Esophagus muscularis mucosa (tissue), 4 donors: ENCODE measurements at regions of chr14 and their contacts with region 1.

Region 1: DNA sequence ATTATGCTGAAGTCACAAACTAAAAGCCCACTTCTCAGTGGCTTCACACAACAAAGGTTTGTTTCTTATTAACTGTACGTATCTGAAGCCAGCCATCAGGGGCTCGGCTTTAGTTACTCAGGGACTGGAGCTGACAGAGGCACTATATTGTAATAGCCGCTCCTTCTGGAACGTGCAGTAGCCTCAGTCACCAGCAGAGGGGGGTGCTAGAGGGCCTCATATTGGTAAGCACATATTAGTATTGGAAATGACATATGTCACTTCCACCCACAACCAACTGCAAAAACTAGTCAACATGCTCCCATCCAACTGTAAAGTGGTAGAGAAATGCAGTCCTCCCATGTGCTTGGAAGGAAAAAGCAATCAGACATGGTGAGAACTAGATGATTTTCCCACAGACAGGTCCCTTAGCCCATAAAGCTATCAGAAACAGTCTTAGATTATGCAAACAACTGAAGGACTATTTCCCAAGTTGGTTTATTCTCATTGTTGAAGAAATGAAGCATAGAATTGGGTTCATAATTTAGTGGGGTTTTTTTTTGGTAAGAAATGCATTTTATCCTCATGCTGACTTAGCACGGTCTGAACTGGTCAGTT is 183.6 kb upstream of the G2E3 start:
- DNase-seq: no peak
- H3K4me3 ChIP-seq: no peak overlapping the region
- H3K27ac ChIP-seq: no peak overlapping the region
- H3K4me1 ChIP-seq: no peaks in the 10 kb centered on the region
- H3K27me3 ChIP-seq: no peaks in the 10 kb centered on the region
- CTCF ChIP-seq: peak; percentile 67 to 87 (median 71)
- EP300 ChIP-seq: no peak
- POLR2A ChIP-seq: no peak

Region 2: GRCh38 chr14:29671034-29671433 is 704.4 kb before region 1 on chr14:
- intact Hi-C with region 1: no loop called
- DNase-seq: no peak
- H3K4me3 ChIP-seq: no peak overlapping the region
- H3K27ac ChIP-seq: peak overlapping the region in 1 of 4 donors; percentile 13
- H3K4me1 ChIP-seq: peaks cover 0 to 10% (median 2%) of the 10 kb centered on the region in 4 donors
- H3K27me3 ChIP-seq: no peaks in the 10 kb centered on the region
- CTCF ChIP-seq: no peak
- EP300 ChIP-seq: no peak
- POLR2A ChIP-seq: no peak

Region 3: DNA sequence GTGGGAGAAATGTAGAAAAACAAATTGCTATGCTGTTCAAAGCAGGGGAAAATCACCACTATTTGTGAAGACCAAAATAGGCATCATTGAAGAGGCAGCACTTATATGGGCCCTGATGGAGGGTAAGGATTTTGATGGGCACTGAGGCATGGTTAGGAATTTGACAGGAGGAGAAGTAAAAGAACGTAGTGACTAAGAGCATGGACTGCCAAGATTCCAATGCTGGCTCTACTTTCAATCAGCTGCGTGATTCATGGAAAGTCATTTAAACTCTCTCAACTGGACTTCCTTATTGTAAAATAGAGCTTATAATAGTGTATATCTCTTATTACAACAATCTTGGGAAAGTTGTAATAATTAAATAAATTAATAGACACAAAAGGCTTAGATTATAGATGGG is 84.2 kb before region 1 on chr14:
- intact Hi-C with region 1: no loop called
- DNase-seq: no peak
- H3K4me3 ChIP-seq: no peak overlapping the region
- H3K27ac ChIP-seq: no peak overlapping the region
- H3K4me1 ChIP-seq: no peaks in the 10 kb centered on the region
- H3K27me3 ChIP-seq: no peaks in the 10 kb centered on the region
- CTCF ChIP-seq: no peak
- EP300 ChIP-seq: no peak
- POLR2A ChIP-seq: no peak

Region 4: GRCh38 chr14:30443368-30444007 is 68.1 kb after region 1 on chr14:
- intact Hi-C with region 1: loop called (anchors 5 kb)
- DNase-seq: no peak
- H3K4me3 ChIP-seq: no peak overlapping the region
- H3K27ac ChIP-seq: no peak overlapping the region
- H3K4me1 ChIP-seq: no peaks in the 10 kb centered on the region
- H3K27me3 ChIP-seq: no peaks in the 10 kb centered on the region
- CTCF ChIP-seq: peak; percentile 42 to 49 (median 48)
- EP300 ChIP-seq: no peak
- POLR2A ChIP-seq: no peak

Region 5: GRCh38 chr14:30521899-30522736 is 146.7 kb after region 1 on chr14:
- intact Hi-C with region 1: loop called (anchors 5 kb)
- DNase-seq: no peak
- H3K4me3 ChIP-seq: no peak overlapping the region
- H3K27ac ChIP-seq: no peak overlapping the region
- H3K4me1 ChIP-seq: no peaks in the 10 kb centered on the region
- H3K27me3 ChIP-seq: no peaks in the 10 kb centered on the region
- CTCF ChIP-seq: peak; percentile 60 to 84 (median 77)
- EP300 ChIP-seq: no peak
- POLR2A ChIP-seq: no peak